ENCODE measurements at regions of chr2 and their contacts with region 1.

Region 1: DNA sequence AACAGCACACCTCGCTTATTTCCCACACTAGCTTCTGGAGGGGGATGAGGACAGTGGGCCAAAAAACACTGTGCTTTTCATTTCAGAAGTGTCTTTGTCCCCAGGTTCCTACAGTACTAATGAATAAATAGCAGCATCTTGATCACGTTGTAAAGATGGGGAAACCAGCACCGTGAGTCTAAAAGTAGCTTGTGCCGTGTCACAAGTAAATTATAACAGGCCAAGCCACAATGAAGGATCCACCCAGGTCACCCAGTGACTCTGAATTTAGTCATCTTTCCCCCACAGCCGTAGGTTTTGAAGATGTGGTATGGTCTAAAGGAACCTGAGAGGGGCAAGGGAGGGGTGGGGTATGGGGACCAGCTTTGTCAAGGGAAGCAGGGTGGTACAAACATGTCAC is 8.8 kb downstream of the FZD7 start:
- DNase-seq: no peak
- H3K4me3 ChIP-seq: no peak overlapping the region
- H3K27ac ChIP-seq: no peak overlapping the region
- H3K4me1 ChIP-seq: peaks cover 0 to 10% (median 5%) of the 10 kb centered on the region in 4 experiments; a peak in 4 of 7 replicates
- H3K27me3 ChIP-seq: no peaks in the 10 kb centered on the region
- CTCF ChIP-seq: no peak
- EP300 ChIP-seq: no peak
- POLR2A ChIP-seq: no peak
- RAD21 ChIP-seq: no peak

Region 2: GRCh38 chr2:202056392-202057010 is 14.1 kb after region 1 on chr2:
- CTCF ChIA-PET with region 1: interaction called, 11 read pairs
- POLR2A ChIA-PET with region 1: interaction called, 6 read pairs
- DNase-seq: no peak
- H3K4me3 ChIP-seq: no peak overlapping the region
- H3K27ac ChIP-seq: no peak overlapping the region
- H3K4me1 ChIP-seq: peaks cover 2 to 9% (median 6%) of the 10 kb centered on the region in 4 experiments; a peak in 6 of 7 replicates
- H3K27me3 ChIP-seq: no peaks in the 10 kb centered on the region
- CTCF ChIP-seq: no peak
- EP300 ChIP-seq: no peak
- POLR2A ChIP-seq: no peak
- RAD21 ChIP-seq: no peak